ENCODE measurements at regions of chr9 and their contacts with region 1.

Region 1: DNA sequence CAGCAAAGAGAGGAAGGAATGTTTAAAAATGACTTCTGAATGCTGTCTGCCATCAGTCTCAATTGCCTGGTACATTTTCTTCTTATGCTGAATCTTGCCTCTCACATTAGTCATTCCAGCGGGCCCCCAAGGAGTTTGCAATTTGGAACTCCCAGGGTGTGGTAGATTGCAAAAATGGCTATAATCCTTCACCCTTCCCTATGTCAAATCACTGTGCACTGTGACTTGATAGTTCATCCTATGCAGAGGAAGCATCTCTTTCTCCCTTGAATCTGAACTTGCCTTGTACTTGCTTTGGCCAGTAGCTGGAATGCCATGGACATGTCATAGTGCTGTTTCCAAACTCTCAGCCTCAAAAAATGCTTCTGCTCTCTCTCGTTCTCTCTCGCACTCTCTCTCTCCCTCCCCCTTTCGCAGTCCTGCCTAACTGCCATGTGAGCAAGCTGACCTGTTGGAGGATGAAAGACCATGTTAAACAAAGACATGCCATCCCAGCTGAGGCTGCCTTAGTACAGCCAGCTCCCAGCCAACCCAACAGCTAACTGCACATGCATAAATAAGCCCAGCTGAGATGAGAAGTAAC is 284.0 kb upstream of the TLE4 start:
- DNase-seq: no peak
- H3K4me3 ChIP-seq: no peak overlapping the region
- H3K27ac ChIP-seq: no peak overlapping the region
- H3K4me1 ChIP-seq: no peaks in the 10 kb centered on the region
- CTCF ChIP-seq: no peak

Region 2: DNA sequence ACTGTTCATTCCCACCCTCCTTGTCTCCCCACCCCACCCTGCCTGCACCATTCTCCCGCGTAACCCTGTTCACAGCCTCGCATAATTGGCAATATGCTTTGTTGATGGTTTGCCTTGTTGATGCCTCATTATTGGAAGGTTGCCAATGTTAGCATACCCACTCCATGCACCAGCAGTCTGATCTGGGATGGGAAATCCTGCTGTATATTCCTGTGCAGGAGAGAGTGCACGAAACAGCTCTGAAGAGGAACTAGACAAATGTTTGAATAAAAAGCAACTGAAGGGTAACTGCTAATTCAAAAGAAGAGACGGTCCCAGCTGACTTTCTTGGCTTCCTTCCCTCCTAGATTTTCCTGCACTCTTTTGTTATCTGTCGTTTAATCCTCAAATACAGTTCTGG is 12.3 kb after region 1 on chr9:
- CTCF ChIA-PET with region 1: no interaction called
- POLR2A ChIA-PET with region 1: interaction called, 11 read pairs
- intact Hi-C with region 1: no loop called
- DNase-seq: no peak
- H3K4me3 ChIP-seq: no peak overlapping the region
- H3K27ac ChIP-seq: no peak overlapping the region
- H3K4me1 ChIP-seq: no peaks in the 10 kb centered on the region
- CTCF ChIP-seq: no peak